Activated CD8-positive, alpha-beta memory T cell treated with anti-CD3 and anti-CD28 coated beads, Interleukin-2, amount 10 ng/mL, durations not matched to agents 7 days and 5 days (primary cell): ENCODE measurements at regions of chr11 and their contacts with region 1.

Region 1: GRCh38 chr11:107770551-107770951 is 58.7 kb upstream of the SLN start:
- DNase-seq: no peak
- ATAC-seq: no peak
- H3K4me3 Mint-ChIP-seq: no peak overlapping the region
- H3K27ac Mint-ChIP-seq: no peak overlapping the region
- H3K4me1 Mint-ChIP-seq: peaks cover 15% of the 10 kb centered on the region
- H3K27me3 Mint-ChIP-seq: peaks cover 12% of the 10 kb centered on the region

Region 2: DNA sequence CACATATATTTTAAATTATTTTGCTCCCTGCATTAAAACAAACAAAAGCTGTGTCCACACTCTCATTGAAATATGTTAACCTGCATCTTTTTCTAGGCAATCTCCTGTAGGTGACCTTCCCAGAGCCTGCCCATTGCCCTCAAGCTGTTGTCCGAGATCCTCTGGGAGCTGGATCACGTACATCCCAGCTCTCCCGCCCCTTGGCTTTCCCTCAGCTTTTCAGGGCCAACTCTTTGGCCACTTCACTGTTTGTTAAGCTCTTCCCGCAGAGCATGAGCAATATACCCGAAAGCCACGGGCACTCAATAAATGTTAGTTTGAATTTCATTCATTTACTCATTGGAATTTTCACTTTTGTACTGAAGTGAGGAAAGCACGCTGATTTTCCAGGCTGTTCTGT is 147.4 kb before region 1 on chr11:
- CTCF ChIA-PET with region 1: no interaction called
- DNase-seq: no peak
- ATAC-seq: no peak
- H3K4me3 Mint-ChIP-seq: no peak overlapping the region
- H3K27ac Mint-ChIP-seq: no peak overlapping the region
- H3K4me1 Mint-ChIP-seq: no peaks in the 10 kb centered on the region
- H3K27me3 Mint-ChIP-seq: peaks cover 47% of the 10 kb centered on the region

Region 3: DNA sequence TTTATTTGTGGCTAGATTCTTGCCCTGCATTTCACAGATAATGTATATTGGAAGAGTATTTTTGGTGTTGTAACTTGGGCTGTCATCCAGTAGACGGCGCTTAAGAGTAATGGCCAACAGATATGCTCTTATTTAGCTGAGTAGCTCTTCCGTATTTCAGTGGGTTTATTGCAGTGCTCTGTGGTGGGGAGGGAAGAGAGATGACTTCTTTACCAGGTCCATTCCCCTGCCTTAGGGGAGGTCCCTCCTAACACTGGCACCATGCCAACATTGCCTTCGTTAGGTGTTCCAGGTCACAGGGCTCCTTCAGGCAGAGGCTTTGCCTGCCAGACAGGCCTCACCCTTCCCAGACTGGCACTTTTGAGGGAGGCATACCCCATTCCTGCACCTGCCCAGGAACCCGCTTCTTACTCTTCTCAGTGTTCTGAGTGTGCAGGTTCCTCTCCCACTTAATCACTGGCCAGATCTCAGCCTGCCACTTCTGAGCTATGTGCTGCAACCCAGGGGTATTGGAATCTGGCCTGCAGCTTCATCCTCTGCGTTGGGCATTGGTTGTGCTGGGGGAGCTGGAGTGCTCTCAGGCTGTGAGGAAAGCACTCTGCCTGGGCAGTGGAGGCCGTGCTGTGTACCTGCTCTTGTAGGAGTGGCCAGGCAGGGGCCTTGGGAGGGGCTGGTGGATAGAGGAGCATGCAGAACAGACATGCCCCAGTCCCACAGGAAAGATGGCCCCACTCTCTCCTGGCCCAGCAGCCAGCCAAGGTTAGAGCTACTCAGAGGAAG is 29.3 kb before region 1 on chr11:
- CTCF ChIA-PET with region 1: interaction called, 14 read pairs
- DNase-seq: no peak
- ATAC-seq: peak; percentile 60
- H3K4me3 Mint-ChIP-seq: no peak overlapping the region
- H3K27ac Mint-ChIP-seq: no peak overlapping the region
- H3K4me1 Mint-ChIP-seq: no peaks in the 10 kb centered on the region
- H3K27me3 Mint-ChIP-seq: peaks cover 48% of the 10 kb centered on the region